ENCODE measurements at regions of chrX and their contacts with region 1.

Region 1: DNA sequence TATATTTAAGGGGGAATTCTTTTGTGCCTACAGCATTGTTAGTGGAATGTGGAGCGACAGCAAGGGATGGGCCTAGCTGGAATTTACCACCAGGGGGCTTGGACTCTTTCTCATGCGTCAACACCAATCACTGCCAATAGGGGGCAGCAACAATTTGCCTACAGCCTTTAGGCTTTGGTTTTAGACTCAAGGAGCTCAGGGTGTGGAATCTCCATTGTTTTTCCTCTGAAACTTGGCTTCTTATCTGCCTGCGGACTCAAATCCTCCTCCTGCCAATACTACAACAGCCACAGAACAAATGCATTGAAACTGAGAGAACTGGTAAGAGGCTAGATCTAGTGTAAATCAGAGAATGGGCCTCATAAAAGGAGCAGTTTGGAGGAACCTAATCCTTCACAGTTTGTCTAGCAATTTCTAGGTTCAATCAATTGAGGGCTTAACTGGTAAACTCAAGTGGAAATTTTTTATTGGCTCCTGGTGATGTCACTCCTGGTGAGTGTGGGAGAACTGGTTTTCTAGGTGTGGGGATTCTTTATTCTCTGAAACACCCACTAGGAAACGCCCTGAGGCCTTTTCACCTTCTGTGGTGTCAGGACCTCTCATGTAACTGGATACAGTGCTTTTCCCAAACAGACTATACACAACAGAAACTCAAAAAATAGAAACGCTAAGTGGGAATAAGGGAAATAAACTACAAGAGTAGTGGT is 27.9 kb upstream of the TMSB4X start:
- DNase-seq: peak in 3 of 10 donors; percentile 38 to 45 (median 44)
- H3K4me3 ChIP-seq: no peak overlapping the region
- H3K27ac ChIP-seq: peak overlapping the region in 3 of 59 donors; percentile 9 to 45 (median 28)
- H3K27me3 ChIP-seq: peaks cover 0 to 41% (median 4%) of the 10 kb centered on the region in 45 donors
- CTCF ChIP-seq: peak; percentile 42 to 93 (median 83)

Region 2: DNA sequence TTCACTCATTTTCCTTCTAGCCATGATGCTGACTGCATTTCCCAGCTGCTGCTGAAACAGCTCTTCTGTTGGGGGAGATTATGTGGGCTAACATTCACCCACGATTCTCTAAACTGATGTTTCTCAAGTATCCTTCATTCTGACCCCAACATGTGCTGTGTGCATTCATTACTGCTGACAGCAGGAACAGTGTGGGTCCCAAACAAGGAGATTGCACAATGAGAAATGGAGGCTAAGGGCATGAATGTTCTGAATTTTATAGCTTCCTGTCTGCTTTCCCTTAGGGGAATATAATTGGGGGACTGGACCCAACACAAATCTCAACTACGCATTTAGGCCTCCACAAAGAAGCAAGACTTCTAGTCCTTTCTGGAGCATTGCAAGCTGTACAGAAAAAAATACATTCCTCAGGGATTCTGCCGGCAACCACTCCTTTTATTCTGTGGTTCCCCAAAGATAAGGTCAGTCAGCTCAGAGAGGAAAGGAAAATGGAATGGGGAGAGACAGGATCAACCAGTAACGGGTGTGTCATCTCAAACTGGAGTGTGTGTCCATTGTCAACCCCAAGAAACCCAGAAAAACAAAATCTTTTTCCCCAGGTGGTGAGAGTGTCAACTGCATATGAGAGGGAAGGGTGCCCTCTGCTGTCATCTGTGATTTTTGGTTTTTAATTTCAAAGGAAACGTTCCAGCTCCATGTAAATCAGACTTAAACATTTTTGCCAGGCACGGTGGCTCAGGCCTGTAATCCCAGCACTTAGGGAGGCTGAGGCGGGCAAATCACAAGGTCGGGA is 540.9 kb after region 1 on chrX:
- intact Hi-C with region 1: loop called in 1 of 2 experiments (anchors 5 kb)
- DNase-seq: peak in 2 of 10 donors; percentile 21 to 32
- H3K4me3 ChIP-seq: no peak overlapping the region
- H3K27ac ChIP-seq: peak overlapping the region in 51 of 59 donors; percentile 8 to 81 (median 62)
- H3K27me3 ChIP-seq: peaks cover 0 to 65% (median 16%) of the 10 kb centered on the region in 45 donors
- CTCF ChIP-seq: peak; percentile 44 to 81 (median 68)

Measured in dorsolateral prefrontal cortex (tissue), 120 donors.